Activated T-helper 2 cell treated with anti-CD3 and anti-CD28 coated beads, Interferon-gamma antibody, Interleukin-2, Interleukin-4, amounts not matched to agents 10 μg/mL and 5 μg/mL and 100 μg/mL, durations not matched to agents 14 hours and 24 hours and 36 hours (primary cell): ENCODE measurements at regions of chr12 and their contacts with region 1.

Region 1: DNA sequence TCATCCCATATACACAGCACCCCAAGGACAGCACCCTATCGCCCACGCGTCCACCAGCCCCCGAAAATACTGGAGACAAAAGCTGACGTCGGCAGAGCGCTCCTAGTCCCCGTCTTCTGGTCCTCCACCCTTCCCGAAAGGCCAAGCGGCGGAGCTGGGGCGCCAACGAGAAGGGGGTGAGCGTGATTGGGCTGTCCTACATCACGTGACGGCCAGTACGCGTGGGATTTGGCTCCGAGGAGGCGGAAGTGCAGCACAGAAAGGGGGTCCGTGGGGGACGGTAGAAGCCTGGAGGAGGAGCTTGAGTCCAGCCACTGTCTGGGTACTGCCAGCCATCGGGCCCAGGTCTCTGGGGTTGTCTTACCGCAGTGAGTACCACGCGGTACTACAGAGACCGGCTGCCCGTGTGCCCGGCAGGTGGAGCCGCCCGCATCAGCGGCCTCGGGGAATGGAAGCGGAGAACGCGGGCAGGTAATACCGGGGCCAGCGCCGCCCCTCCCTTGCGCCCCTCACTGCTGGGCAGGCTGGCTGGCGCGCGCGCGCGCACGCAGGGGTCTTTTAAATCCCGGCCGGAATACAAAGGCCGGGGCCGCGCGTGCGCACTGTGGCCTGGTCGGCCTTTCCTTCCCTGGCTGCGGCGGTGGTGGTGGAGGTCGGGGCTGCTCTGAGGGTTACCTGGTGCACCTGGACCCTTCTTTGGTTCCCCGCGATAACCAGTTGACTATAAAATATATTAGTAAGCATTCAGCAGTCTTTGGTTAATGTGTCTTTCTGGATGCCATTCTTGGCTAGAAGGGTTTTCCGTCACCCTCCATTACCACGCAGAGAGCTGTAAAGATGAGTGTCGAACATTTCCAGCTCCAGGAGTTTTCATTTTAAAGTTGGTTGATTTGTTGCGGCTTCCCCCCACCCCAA is at the start of gene TDG:
- DNase-seq: peak; percentile 96
- H3K4me3 Mint-ChIP-seq: peak within 1 kb of the TSS; percentile 98
- H3K27ac Mint-ChIP-seq: peak within 1 kb of the TSS; percentile 99
- H3K4me1 Mint-ChIP-seq: peaks cover 28% of the 10 kb centered on the region
- H3K27me3 Mint-ChIP-seq: no peaks in the 10 kb centered on the region
- total RNA-seq, gene TDG: 76.6 and 77.3 TPM in 2 replicates

Region 2: DNA sequence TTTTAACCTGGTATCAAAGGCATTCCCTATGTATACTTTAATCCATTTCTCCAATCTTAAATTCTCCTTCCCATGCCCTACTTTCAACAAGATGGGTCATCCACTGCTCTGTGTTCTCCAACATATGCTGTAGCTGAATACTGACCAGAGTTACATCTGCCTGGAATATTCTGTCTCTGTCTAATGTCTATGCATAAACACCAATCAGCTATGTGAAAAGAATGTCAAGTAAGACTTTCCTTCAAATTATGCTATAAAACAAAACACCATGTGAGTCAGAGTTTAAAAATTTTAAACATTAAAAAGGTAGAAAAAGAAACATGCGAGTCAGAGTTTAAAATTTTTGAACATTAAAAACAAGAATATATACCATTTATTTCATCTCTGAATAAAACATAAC is 144.1 kb before region 1 on chr12:
- intact Hi-C with region 1: no loop called
- DNase-seq: no peak
- H3K4me3 Mint-ChIP-seq: no peak overlapping the region
- H3K27ac Mint-ChIP-seq: no peak overlapping the region
- H3K4me1 Mint-ChIP-seq: peaks cover 5% of the 10 kb centered on the region
- H3K27me3 Mint-ChIP-seq: no peaks in the 10 kb centered on the region

Region 3: GRCh38 chr12:103884316-103884715 is 81.5 kb before region 1 on chr12:
- intact Hi-C with region 1: loop called (anchors 5 kb)
- DNase-seq: no peak
- H3K4me3 Mint-ChIP-seq: no peak overlapping the region
- H3K27ac Mint-ChIP-seq: no peak overlapping the region
- H3K4me1 Mint-ChIP-seq: peaks cover 21% of the 10 kb centered on the region
- H3K27me3 Mint-ChIP-seq: peaks cover 3% of the 10 kb centered on the region

Region 4: GRCh38 chr12:103947871-103948555 is 17.8 kb before region 1 on chr12:
- intact Hi-C with region 1: loop called (anchors 2 kb)
- DNase-seq: no peak
- H3K4me3 Mint-ChIP-seq: peak overlapping the region; percentile 21
- H3K27ac Mint-ChIP-seq: peak overlapping the region; percentile 71
- H3K4me1 Mint-ChIP-seq: peaks cover 53% of the 10 kb centered on the region
- H3K27me3 Mint-ChIP-seq: no peaks in the 10 kb centered on the region

Region 5: DNA sequence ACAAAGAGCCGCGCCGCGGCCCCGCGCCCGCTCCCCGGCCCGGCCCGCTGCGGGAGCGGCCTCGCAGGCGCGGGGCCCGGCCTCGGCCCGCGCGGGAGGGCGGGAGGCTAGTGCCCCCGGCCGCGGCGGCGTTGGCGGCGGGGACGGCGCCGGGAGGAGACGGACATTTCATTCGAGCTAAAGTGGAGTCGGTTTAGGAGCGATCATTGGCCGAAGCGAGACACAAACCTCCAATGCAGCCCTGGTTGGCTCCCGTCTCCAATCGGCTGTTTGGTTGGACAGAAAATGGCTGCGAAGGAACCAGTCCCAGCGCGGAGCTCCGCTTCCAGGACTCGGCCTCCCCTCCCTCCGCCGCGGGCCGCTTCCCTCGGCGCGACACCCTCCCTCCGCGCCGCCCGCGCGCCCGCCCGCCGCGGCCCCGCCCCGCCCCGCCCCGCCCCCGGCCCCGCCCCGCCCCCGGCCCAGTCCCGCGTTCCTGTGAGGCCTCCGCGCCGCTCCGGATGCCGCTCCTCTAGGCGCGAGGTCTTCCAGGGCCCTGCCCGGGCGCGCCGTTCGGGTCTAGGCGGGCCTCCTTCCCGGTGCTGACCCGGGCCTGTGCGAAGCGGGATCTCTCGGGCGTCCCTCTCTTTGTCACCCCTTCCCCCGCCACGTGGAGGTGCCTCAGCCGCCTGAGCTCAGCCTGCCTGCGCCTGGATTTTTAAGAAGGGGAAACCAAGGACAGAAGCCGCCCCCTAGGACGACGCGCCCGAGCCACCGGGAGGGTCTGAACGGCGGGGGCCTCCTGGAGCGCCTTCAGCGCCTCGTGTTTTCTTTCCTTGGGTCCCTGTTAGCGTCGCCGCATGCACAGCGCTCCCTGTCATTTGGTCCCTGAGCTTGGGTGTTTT is 172.3 kb after region 1 on chr12 and contains the start of gene NFYB:
- intact Hi-C with region 1: loop called (anchors 5 kb)
- DNase-seq: peak; percentile 91
- H3K4me3 Mint-ChIP-seq: peak within 1 kb of the TSS; percentile 84
- H3K27ac Mint-ChIP-seq: peak within 1 kb of the TSS; percentile 86
- H3K4me1 Mint-ChIP-seq: peaks cover 17% of the 10 kb centered on the region
- H3K27me3 Mint-ChIP-seq: peaks cover 14% of the 10 kb centered on the region
- total RNA-seq, gene NFYB: 29.0 and 30.0 TPM in 2 replicates